Heart right ventricle (tissue), 16 donors: ENCODE measurements at regions of chr14 and their contacts with region 1.

Region 1: DNA sequence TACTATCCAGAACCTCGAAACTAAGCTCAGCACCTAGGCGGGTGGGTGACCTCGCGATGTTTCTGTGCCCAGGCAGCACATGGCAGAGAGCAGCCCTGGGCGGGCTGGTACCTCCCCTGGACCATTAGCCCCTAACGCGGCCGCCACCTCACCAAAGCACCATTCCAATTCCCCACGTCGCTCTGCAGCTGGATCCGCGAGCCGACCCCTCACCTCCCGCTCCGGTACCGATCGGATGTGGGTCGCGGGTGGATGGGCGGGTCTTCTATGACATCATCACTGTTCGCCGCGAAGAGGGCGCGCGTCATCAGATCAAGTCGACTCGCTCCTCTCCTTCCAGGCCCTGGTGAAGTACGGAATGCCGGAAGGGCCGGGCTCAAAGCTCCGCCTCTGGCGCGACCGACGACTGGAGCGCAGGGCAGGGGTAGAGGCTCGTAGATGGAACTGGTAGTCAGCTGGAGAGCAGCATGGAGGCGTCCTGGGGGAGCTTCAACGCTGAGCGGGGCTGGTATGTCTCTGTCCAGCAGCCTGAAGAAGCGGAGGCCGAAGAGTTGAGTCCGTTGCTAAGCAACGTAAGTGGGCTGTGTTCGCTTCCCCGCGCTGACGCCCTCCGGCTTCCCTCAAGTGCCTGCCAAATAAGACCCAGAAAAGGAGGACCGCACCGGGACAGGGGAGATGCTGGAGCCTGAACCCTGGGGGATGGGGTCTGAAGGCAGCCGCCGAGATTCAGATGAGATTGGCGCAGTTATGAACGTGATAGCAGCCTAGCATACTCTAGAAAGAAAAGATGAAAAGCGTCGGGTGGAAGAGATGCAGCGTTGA is at the starts of genes SLC38A6 and TRMT5:
- DNase-seq: peak; percentile 92 to 94
- ATAC-seq: peak; percentile 96 to 99 (median 98)
- H3K4me3 ChIP-seq: peak within 1 kb of the TSS; percentile 53 to 85 (median 76)
- H3K27ac ChIP-seq: peak within 1 kb of the TSS; percentile 42 to 91 (median 86)
- H3K4me1 ChIP-seq: peaks cover 3 to 52% (median 33%) of the 10 kb centered on the region in 9 donors
- H3K27me3 ChIP-seq: no peaks in the 10 kb centered on the region
- CTCF ChIP-seq: no peak
- total RNA-seq, gene SLC38A6: 2.7 to 8.9 (median 3.6) TPM
- total RNA-seq, gene TRMT5: 5.3 to 8.9 (median 6.8) TPM

Region 2: GRCh38 chr14:60724137-60724619 is 256.8 kb before region 1 on chr14 and contains the start of gene SIX4:
- intact Hi-C with region 1: loop called in 2 of 10 experiments (anchors 5 to 10 kb)
- DNase-seq: peak; percentile 41 to 57
- ATAC-seq: peak; percentile 60 to 93 (median 88)
- H3K4me3 ChIP-seq: peak within 1 kb of the TSS; percentile 59 to 80 (median 74)
- H3K27ac ChIP-seq: peak within 1 kb of the TSS in 3 of 10 donors; percentile 21 to 58 (median 54)
- H3K4me1 ChIP-seq: peaks cover 0 to 34% (median 19%) of the 10 kb centered on the region in 9 donors
- H3K27me3 ChIP-seq: peaks cover 0 to 98% (median 67%) of the 10 kb centered on the region in 7 donors
- CTCF ChIP-seq: no peak
- total RNA-seq, gene SIX4: 0.59 to 1.5 (median 0.82) TPM

Region 3: DNA sequence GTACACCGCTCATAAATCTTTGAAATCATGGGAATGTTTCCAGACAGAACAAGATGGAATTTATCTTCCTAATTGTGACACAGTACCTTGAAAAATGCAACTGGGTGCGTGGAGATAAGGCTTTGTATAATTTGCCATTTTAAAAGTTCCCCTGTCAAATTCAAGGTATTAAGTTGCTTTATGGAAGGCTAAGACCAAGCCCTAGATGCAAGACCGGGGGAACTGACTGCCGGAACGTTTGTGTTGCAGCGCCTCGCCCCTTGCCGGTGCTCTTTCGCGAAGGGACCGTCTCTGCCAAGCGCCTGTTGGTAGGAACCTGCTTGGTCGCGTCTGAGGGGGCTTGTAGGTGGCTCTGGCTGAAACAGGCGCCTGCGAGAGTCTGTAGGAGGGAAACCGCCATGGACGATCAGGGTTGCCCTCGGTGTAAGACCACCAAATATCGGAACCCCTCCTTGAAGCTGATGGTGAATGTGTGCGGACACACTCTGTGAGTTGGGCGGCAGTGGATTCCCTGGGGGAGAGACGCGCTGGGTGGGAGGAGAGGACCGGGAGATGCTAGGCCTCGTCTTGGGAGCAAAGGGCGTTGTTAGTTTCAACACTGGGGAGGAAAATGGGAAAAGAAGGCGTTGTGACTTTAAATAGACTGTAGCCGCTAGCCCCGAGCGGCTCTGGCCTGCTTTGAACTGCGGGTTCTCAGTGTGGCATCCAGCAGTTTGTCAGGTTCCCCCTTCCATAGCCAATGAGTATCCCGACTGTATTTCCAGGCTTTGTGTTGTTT is 246.4 kb before region 1 on chr14 and contains the start of gene MNAT1:
- intact Hi-C with region 1: loop called in 2 of 10 experiments (anchors 10 kb)
- DNase-seq: peak; percentile 75 to 76
- ATAC-seq: peak; percentile 88 to 98 (median 96)
- H3K4me3 ChIP-seq: peak within 1 kb of the TSS; percentile 58 to 96 (median 82)
- H3K27ac ChIP-seq: peak within 1 kb of the TSS in 9 of 10 donors; percentile 55 to 85 (median 82)
- H3K4me1 ChIP-seq: peaks cover 0 to 30% (median 26%) of the 10 kb centered on the region in 9 donors
- H3K27me3 ChIP-seq: peaks cover 0 to 23% (median 0%) of the 10 kb centered on the region in 7 donors
- CTCF ChIP-seq: no peak
- total RNA-seq, gene MNAT1: 22.8 to 35.3 (median 29.9) TPM

Region 4: GRCh38 chr14:60862286-60862685 is 118.7 kb before region 1 on chr14:
- intact Hi-C with region 1: loop called in 1 of 10 experiments (anchors 5 kb)
- DNase-seq: peak in 1 of 2 donors; percentile 41
- ATAC-seq: peak in 7 of 8 donors; percentile 55 to 94 (median 76)
- H3K4me3 ChIP-seq: no peak overlapping the region
- H3K27ac ChIP-seq: peak overlapping the region in 1 of 10 donors; percentile 17
- H3K4me1 ChIP-seq: peaks cover 0 to 39% (median 11%) of the 10 kb centered on the region in 9 donors
- H3K27me3 ChIP-seq: no peaks in the 10 kb centered on the region
- CTCF ChIP-seq: no peak